MCF 10A (cell line): ENCODE measurements at regions of chr1 and their contacts with region 1.

Region 1: GRCh38 chr1:231183875-231184590 is 22.2 kb downstream of the TRIM67 start:
- DNase-seq: no peak
- H3K4me3 Mint-ChIP-seq: no peak overlapping the region
- H3K27ac Mint-ChIP-seq: no peak overlapping the region
- H3K4me1 Mint-ChIP-seq: no peaks in the 10 kb centered on the region
- H3K27me3 Mint-ChIP-seq: peaks cover 74% of the 10 kb centered on the region
- CTCF ChIP-seq: no peak

Region 2: DNA sequence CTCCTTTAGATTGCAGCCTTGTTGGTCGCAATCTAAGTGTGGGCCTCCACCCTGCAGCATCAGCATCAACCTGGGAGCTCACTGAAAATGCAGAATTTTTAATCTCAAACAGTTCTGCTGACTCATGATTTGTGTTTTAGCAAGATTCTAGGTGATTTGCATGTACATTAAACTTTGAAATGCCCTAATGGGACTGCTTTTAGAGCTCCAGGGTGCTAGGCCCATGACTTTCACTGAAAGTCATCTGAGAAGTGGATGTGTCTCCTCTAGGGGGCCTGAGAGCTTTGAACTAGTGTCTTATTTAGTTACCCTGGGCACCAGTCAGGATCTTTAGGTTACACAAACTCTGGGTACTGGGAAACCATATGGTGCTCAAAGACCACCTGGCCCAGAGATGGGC is 13.2 kb before region 1 on chr1:
- CTCF ChIA-PET with region 1: interaction called, 4 read pairs
- POLR2A ChIA-PET with region 1: interaction called, 16 read pairs
- intact Hi-C with region 1: no loop called
- DNase-seq: peak; percentile 57
- H3K4me3 Mint-ChIP-seq: no peak overlapping the region
- H3K27ac Mint-ChIP-seq: peak overlapping the region; percentile 8
- H3K4me1 Mint-ChIP-seq: peaks cover 11% of the 10 kb centered on the region
- H3K27me3 Mint-ChIP-seq: peaks cover 20% of the 10 kb centered on the region
- CTCF ChIP-seq: peak; percentile 12